ENCODE measurements at regions of chr12 and their contacts with region 1.

Region 1: GRCh38 chr12:123075646-123076171 is 75.2 kb downstream of the PITPNM2 start:
- DNase-seq: peak; percentile 87
- ATAC-seq: peak; percentile 75
- H3K4me3 Mint-ChIP-seq: peak overlapping the region; percentile 68
- H3K27ac Mint-ChIP-seq: peak overlapping the region; percentile 94
- H3K4me1 Mint-ChIP-seq: peaks cover 56% of the 10 kb centered on the region
- H3K27me3 Mint-ChIP-seq: no peaks in the 10 kb centered on the region

Region 2: GRCh38 chr12:122265931-122266771 is 809.6 kb before region 1 on chr12 and contains the start of gene VPS33A:
- CTCF ChIA-PET with region 1: no interaction called
- POLR2A ChIA-PET with region 1: no interaction called
- intact Hi-C with region 1: loop called in 1 of 2 experiments (anchors 1 kb)
- DNase-seq: peak; percentile 98
- ATAC-seq: peak; percentile 86
- H3K4me3 Mint-ChIP-seq: peak within 1 kb of the TSS; percentile 97
- H3K27ac Mint-ChIP-seq: peak within 1 kb of the TSS; percentile 98
- H3K4me1 Mint-ChIP-seq: peaks cover 23% of the 10 kb centered on the region
- H3K27me3 Mint-ChIP-seq: no peaks in the 10 kb centered on the region
- total RNA-seq, gene VPS33A: 24.8 to 26.4 TPM

Region 3: DNA sequence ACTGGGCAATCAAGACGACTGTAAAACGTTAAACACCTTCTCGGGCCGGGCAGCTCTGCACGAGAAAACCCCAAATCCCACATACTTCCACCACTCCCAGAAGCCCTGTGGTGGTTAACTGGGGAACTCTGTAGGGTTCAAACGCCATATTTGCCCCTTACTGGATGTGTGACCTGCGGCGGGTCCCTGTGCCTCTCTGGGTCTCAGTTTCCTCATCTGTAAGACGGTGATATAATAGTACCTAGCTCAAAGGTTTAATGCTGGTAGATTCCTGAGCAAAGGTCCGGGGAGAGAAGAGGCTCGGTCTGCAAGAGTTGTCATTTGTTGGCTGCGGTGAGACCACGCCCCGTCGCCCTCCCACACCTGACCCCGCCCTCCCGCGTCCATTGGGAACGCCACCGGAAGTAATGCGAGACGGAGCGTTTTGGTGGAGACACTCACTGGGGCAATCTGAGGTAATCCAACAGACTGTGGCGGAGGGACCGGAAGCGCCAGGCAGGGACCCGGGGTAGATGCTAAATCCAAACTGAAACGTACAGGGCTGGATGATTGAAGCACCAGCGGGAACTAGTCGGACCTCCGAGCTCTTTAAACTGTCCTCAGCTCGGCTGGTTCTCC is 101.3 kb before region 1 on chr12:
- CTCF ChIA-PET with region 1: no interaction called
- POLR2A ChIA-PET with region 1: no interaction called
- intact Hi-C with region 1: loop called (anchors 1 to 5 kb)
- DNase-seq: peak; percentile 99
- ATAC-seq: peak; percentile 86
- H3K4me3 Mint-ChIP-seq: peak overlapping the region; percentile 95
- H3K27ac Mint-ChIP-seq: peak overlapping the region; percentile 100
- H3K4me1 Mint-ChIP-seq: peaks cover 21% of the 10 kb centered on the region
- H3K27me3 Mint-ChIP-seq: no peaks in the 10 kb centered on the region

Region 4: DNA sequence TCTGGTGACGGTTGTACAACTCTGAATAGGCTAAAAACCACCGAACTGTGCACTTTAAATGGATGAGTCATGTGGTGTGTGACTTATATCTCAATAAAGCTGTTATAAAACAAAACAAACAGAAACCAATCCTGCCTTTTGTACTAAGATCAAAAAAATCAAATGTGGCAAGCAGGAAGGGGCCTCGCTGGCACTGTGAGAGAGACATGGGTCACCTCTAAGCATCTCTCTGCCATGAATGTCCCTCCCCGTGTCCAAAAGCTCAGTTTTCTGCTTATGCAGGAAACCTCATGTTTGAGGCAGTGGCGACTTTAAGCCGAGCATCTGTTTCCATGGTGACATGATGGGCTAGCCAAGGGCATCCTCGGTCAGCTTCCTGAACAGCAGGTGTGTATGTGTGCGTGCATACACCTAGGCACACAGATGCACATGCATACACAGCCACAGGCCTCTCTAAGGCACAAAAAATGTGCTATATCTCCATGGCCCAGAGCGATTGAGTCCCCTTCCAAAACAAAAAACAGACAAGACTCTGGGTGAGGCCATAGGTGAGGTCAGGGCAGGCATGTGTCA is 50.8 kb before region 1 on chr12:
- CTCF ChIA-PET with region 1: no interaction called
- POLR2A ChIA-PET with region 1: interaction called, 8 read pairs
- intact Hi-C with region 1: loop called (anchors 1 kb)
- DNase-seq: peak; percentile 66
- ATAC-seq: peak; percentile 94
- H3K4me3 Mint-ChIP-seq: no peak overlapping the region
- H3K27ac Mint-ChIP-seq: peak overlapping the region; percentile 81
- H3K4me1 Mint-ChIP-seq: peaks cover 31% of the 10 kb centered on the region
- H3K27me3 Mint-ChIP-seq: no peaks in the 10 kb centered on the region

Region 5: DNA sequence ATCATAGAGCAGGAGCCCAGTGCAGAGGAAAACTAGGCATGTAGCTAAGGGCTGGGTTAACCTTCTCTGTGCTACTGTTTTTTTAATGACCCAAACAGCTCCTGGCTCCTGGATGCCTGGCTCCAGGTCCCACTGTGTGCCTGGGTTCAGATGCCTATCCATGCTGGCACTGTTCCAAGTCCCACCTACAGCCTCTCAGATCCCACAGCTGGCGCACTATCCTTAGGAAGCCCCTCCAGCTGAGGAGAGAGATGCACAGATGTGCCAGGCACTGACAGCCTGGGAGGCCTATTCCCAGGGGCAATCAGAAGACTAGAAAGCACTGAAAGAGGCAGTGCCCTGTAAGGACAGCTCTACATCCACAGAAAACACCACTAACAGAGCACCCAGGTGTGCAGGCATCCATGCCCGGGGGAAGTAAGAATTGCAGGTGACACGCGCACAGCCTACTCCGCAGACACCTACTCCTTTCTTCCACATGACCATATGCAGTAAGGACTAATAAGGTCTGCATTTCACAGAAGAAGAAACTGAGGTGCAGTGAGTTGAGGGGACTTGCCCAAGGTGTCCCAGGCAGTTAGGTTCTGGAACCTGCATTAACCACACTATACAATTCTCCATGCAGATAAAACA is 24.0 kb after region 1 on chr12:
- CTCF ChIA-PET with region 1: interaction called, 3 read pairs
- POLR2A ChIA-PET with region 1: interaction called, 5 read pairs
- intact Hi-C with region 1: loop called in 1 of 2 experiments (anchors 1 kb)
- DNase-seq: no peak
- ATAC-seq: no peak
- H3K4me3 Mint-ChIP-seq: no peak overlapping the region
- H3K27ac Mint-ChIP-seq: no peak overlapping the region
- H3K4me1 Mint-ChIP-seq: peaks cover 21% of the 10 kb centered on the region
- H3K27me3 Mint-ChIP-seq: no peaks in the 10 kb centered on the region

Region 6: DNA sequence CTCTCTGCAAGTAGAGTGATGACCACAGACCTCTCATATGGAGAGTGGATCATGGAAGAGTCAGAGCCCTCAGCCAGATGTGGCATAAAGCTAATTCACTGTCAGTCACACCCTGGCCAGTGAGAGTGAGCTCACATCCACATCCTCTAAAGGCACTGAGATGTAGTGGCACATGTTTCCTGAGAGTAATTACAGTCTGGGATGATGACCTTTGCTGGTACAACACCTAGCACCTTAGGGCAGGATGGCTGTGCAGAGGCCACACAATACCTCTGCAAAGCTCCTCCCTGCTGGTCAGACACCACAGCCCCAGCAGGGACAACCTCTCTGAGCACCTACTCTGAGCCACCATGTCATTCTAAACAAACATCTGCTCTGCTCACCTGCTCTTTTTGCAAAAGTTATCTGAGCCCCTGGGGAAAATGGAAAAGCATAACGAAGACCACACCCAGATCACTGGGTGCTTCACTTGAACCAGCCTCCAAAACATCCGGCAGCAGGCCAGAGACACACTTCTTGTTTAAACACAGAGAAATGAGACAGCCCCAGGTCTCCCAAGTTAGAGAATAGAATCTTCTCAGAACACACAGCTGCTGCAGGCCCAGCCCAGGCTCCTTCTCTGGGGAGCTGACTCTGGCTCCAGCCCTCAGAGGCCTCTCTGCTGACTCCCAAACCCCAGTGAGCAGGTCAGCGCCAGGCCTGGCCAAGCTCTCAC is 44.9 kb after region 1 on chr12:
- CTCF ChIA-PET with region 1: interaction called, 5 read pairs
- POLR2A ChIA-PET with region 1: interaction called, 3 read pairs
- intact Hi-C with region 1: loop called (anchors 1 to 5 kb)
- DNase-seq: peak; percentile 62
- ATAC-seq: peak; percentile 85
- H3K4me3 Mint-ChIP-seq: no peak overlapping the region
- H3K27ac Mint-ChIP-seq: peak overlapping the region; percentile 85
- H3K4me1 Mint-ChIP-seq: peaks cover 63% of the 10 kb centered on the region
- H3K27me3 Mint-ChIP-seq: no peaks in the 10 kb centered on the region

Region 7: DNA sequence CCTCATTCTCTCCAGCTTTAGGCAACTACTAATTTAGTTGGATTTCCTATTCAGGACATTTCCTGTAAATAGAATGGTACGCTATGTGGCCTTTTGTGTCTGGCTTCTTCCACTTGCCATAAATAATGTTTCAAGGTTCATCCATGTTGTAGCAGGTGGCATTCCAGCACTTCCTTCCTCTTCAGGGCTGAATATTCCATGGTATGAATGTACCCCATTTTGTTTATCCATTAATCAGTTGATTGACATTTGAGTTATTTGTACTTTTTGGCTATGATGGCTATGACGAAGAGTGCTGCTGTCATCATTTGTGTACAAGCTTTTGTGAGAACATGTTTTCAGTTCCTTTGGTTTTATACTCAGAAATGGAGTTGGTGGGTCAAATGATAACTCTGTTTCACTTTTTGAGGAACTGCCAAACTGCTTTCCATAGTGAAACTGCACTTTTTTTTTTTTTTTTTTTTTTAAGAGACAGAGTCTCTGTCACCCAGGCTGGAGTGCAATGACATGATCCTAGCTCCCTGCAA is 202.5 kb after region 1 on chr12:
- CTCF ChIA-PET with region 1: no interaction called
- POLR2A ChIA-PET with region 1: interaction called, 12 read pairs
- intact Hi-C with region 1: no loop called
- DNase-seq: peak; percentile 48
- ATAC-seq: peak; percentile 93
- H3K4me3 Mint-ChIP-seq: no peak overlapping the region
- H3K27ac Mint-ChIP-seq: peak overlapping the region; percentile 79
- H3K4me1 Mint-ChIP-seq: peaks cover 6% of the 10 kb centered on the region
- H3K27me3 Mint-ChIP-seq: no peaks in the 10 kb centered on the region